Heart left ventricle (tissue), 16 donors: ENCODE measurements at regions of chr17 and their contacts with region 1.

Region 1: GRCh38 chr17:2179615-2180295 is 123.8 kb downstream of the SMG6 start:
- DNase-seq: peak; percentile 71 to 94 (median 93)
- ATAC-seq: peak; percentile 55 to 75 (median 74)
- H3K4me3 ChIP-seq: no peak overlapping the region
- H3K27ac ChIP-seq: peak overlapping the region; percentile 76 to 97 (median 86)
- H3K4me1 ChIP-seq: peaks cover 33 to 87% (median 80%) of the 10 kb centered on the region in 12 donors
- H3K27me3 ChIP-seq: no peaks in the 10 kb centered on the region
- CTCF ChIP-seq: no peak
- POLR2A ChIP-seq: no peak

Region 2: GRCh38 chr17:2087597-2088211 is 92.1 kb before region 1 on chr17:
- intact Hi-C with region 1: loop called in 5 of 10 experiments (anchors 5 to 10 kb)
- DNase-seq: peak in 3 of 5 donors; percentile 59 to 68 (median 64)
- ATAC-seq: peak in 2 of 4 donors; percentile 1 to 17
- H3K4me3 ChIP-seq: no peak overlapping the region
- H3K27ac ChIP-seq: peak overlapping the region; percentile 1 to 93 (median 88)
- H3K4me1 ChIP-seq: peaks cover 22 to 96% (median 85%) of the 10 kb centered on the region in 12 donors
- H3K27me3 ChIP-seq: no peaks in the 10 kb centered on the region
- CTCF ChIP-seq: no peak
- POLR2A ChIP-seq: no peak

Region 3: DNA sequence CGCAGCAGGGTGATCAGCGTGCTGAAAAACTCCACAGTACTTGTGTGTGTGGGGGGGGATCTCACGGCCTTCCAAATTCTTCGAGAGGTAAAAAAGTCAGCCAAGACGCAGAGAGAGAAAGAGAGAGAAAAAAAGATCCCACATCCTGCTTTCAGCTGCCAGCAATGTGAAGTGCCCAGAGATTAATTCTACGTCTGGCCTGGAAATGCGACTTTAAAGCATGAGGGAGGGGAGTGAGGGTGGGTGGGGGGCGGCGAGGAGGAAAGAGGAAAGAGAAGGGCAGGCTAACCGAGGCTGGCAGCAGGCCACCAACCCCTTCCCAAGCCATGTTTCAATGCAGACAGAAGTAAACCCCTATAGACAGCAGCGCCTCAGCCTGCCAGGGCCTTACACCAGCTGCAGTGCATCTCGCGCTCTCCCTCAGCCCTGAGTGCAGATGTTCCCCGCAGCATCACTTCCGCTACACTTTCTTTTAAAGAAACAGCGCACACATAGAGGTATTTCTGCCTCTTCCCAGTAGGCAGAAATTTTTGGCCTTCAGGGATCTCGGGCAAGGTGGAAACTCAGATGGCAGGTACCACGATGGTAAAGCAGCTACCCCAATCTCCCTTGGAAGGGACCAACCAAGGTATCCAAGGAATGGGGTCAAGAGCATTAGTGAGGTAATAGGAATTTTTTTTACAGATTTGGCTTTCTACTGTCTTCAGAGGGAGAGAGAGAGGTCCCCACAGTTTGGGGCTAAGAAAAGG is 36.0 kb after region 1 on chr17:
- intact Hi-C with region 1: loop called in 9 of 10 experiments (anchors 1 to 5 kb)
- DNase-seq: peak; percentile 81 to 88 (median 84)
- ATAC-seq: peak; percentile 70 to 80 (median 80)
- H3K4me3 ChIP-seq: peak overlapping the region in 10 of 12 donors; percentile 12 to 47 (median 40)
- H3K27ac ChIP-seq: peak overlapping the region; percentile 74 to 95 (median 88)
- H3K4me1 ChIP-seq: peaks cover 6 to 58% (median 46%) of the 10 kb centered on the region in 12 donors
- H3K27me3 ChIP-seq: no peaks in the 10 kb centered on the region
- CTCF ChIP-seq: peak in 1 of 12 donors; percentile 8
- POLR2A ChIP-seq: no peak

Region 4: GRCh38 chr17:2233441-2233947 is 53.7 kb after region 1 on chr17:
- intact Hi-C with region 1: loop called in 5 of 10 experiments (anchors 2 to 5 kb)
- DNase-seq: peak in 3 of 5 donors; percentile 26 to 62 (median 29)
- ATAC-seq: peak in 3 of 4 donors; percentile 19 to 64 (median 46)
- H3K4me3 ChIP-seq: no peak overlapping the region
- H3K27ac ChIP-seq: peak overlapping the region; percentile 9 to 84 (median 56)
- H3K4me1 ChIP-seq: peaks cover 3 to 80% (median 50%) of the 10 kb centered on the region in 12 donors
- H3K27me3 ChIP-seq: no peaks in the 10 kb centered on the region
- CTCF ChIP-seq: no peak
- POLR2A ChIP-seq: no peak